ENCODE measurements at regions of chr11 and their contacts with region 1.

Region 1: DNA sequence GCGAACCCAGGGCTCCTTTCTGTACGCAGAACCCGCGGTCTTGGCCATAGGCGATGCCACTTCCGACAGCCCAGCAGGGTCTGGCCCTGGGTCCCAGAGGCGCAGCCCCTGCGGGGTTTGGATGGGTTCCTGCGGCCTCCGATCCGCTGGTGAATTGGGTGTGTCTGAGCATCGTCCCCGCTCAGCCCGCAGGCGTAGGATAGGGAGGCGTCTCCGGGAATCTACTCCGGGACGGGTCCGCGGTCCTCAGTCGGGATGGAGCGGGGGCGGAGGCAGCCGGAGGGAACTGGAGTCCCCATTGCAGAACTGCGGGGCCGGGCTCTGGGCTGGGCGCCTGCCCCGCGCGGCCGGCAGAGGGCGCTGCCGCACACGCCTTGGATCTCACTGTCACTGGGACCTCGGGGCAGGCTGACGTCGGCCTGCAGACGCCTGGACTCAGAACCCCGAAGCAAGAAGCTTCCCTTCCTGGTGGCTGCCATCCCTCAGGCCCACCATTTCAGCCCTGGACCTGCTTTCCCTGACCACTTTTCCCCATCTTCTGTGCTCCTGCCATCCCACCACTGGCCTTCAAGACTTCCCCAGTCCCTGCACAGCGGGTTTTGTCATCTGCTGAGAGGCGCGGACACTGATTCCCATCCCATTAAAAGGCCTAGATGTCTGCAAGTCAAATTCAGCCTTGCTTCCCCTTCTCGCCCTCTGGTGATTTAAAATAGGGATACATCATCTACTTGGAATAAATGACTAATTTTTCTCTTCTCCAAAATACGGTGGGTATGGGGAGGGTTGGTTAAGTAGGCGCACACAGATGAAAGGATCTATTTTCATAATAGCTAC is 38.3 kb upstream of the CREB3L1 start:
- DNase-seq: peak; percentile 95
- H3K4me3 ChIP-seq: peak overlapping the region; percentile 61 to 70 (median 64)
- H3K27ac ChIP-seq: peak overlapping the region; percentile 81 to 94 (median 88)
- H3K4me1 ChIP-seq: peaks cover 33 to 53% (median 47%) of the 10 kb centered on the region in 4 donors
- H3K27me3 ChIP-seq: no peaks in the 10 kb centered on the region
- CTCF ChIP-seq: peak in 2 of 3 experiments; percentile 98 to 99
- EP300 ChIP-seq: no peak
- POLR2A ChIP-seq: peak; percentile 11

Region 2: DNA sequence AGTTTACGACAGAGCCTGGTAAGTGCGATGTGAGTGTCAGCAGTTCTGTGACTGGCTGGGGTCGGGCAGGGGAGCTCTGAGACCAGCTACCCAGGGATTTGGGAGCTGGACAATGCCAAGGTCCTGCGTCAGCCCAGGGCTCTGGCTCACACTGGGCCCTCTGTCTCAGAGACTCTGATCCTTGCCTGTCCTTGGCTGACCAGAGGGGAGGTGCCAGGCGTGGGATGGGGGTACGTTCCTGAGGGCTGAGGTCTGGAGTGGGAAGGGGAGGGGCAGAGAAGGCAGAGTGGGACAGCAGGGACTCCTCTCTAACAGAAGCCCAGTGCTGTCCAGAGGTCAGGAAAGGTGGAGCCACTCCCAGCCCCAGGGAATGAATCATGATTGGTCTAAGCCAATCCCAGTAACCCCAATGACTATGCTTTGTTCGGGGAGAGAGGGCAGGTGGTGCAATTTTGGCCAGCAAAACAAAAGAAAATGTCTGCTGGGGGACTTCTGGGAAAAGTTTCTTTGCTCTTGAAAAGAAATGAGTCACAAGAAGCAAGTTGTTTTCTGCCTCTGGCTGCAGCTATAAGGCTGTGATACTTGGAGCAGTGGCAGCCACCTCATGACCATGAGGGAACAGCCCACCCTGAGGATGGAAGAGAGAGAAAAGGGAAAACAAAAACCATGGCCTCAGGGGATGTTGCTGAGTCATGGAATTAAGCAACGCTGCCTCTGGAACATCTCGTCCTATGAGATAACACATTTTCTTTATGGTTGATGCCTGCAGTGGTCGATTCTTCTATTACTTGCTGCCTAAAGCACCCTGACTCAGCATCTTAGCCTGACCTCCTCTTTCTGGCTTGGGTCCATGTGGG is 682.1 kb before region 1 on chr11:
- intact Hi-C with region 1: no loop called
- DNase-seq: no peak
- H3K4me3 ChIP-seq: no peak overlapping the region
- H3K27ac ChIP-seq: peak overlapping the region in 1 of 4 donors; percentile 18
- H3K4me1 ChIP-seq: peaks cover 8 to 20% (median 9%) of the 10 kb centered on the region in 4 donors
- H3K27me3 ChIP-seq: peaks cover 0 to 28% (median 0%) of the 10 kb centered on the region in 4 donors
- CTCF ChIP-seq: no peak
- EP300 ChIP-seq: no peak
- POLR2A ChIP-seq: no peak

Region 3: DNA sequence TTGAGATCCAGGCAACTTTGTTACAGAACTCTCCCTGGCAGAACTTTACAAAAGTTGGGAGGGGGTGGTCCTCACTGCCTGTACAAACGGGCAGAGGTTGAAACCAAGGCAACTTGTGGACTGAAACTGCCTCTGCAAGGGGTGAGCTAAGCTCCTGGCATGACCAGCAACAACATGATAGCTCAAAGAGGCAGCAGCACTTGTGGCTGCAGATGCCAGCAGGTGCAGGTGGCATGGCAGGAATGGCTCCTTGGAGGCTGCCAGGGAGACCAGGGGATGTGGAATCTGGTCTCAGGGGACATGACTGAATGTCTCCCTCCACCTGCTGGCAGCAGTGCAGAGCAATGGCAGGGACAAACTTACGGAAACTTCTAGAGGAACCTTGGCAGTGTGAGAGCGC is 79.1 kb before region 1 on chr11:
- intact Hi-C with region 1: no loop called
- DNase-seq: peak; percentile 68
- H3K4me3 ChIP-seq: no peak overlapping the region
- H3K27ac ChIP-seq: no peak overlapping the region
- H3K4me1 ChIP-seq: no peaks in the 10 kb centered on the region
- H3K27me3 ChIP-seq: peaks cover 0 to 54% (median 0%) of the 10 kb centered on the region in 4 donors
- CTCF ChIP-seq: no peak
- EP300 ChIP-seq: no peak
- POLR2A ChIP-seq: no peak

Region 4: GRCh38 chr11:46308631-46309419 is 69.6 kb after region 1 on chr11:
- intact Hi-C with region 1: loop called (anchors 2 kb)
- DNase-seq: peak; percentile 95
- H3K4me3 ChIP-seq: peak overlapping the region in 1 of 4 donors; percentile 22
- H3K27ac ChIP-seq: no peak overlapping the region
- H3K4me1 ChIP-seq: peaks cover 4 to 10% (median 8%) of the 10 kb centered on the region in 4 donors
- H3K27me3 ChIP-seq: no peaks in the 10 kb centered on the region
- CTCF ChIP-seq: peak; percentile 86 to 89 (median 87)
- EP300 ChIP-seq: no peak
- POLR2A ChIP-seq: no peak

Region 5: DNA sequence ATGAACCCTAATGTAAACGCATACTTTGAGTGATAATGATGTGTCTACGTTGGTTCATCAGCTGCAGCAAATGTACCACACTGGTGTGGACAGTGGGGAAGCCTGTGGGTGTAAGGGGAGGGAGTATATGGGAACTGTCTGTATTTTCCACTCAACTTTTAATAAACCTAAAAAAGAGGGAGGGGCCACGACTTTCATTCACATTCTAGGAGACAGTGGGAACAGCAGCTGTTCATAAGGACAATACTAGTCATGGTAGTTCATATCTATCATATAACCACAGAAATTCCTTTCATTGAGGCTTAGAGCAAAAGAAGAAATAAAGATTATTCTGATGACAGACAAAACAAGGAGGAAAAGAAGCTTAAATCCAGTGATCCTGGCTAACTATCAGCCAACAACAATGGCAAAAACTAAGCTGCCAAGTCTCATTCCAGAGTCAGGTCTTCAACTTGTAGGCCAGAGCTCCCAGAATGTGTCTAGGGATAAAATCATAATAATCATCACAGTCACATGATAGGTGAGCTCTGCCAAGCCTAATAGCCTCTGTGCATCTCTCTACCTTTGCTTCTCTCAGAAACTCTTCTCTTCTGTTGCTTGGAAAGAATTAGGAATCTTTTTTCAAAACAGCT is 211.8 kb after region 1 on chr11:
- intact Hi-C with region 1: no loop called
- DNase-seq: no peak
- H3K4me3 ChIP-seq: no peak overlapping the region
- H3K27ac ChIP-seq: peak overlapping the region in 3 of 4 donors; percentile 17 to 52 (median 32)
- H3K4me1 ChIP-seq: peaks cover 16 to 42% (median 26%) of the 10 kb centered on the region in 4 donors
- H3K27me3 ChIP-seq: no peaks in the 10 kb centered on the region
- CTCF ChIP-seq: no peak
- EP300 ChIP-seq: no peak
- POLR2A ChIP-seq: no peak

Measured in esophagus muscularis mucosa (tissue), 4 donors.